ENCODE measurements at regions of chr17 and their contacts with region 1.

Region 1: GRCh38 chr17:49779739-49780231 is 8.7 kb upstream of the KAT7 start:
- DNase-seq: no peak
- H3K4me3 ChIP-seq: no peak overlapping the region
- H3K27ac ChIP-seq: no peak overlapping the region
- H3K4me1 ChIP-seq: peaks cover 19% of the 10 kb centered on the region
- H3K27me3 ChIP-seq: no peaks in the 10 kb centered on the region
- CTCF ChIP-seq: peak in 2 of 3 experiments; percentile 34 to 57
- POLR2A ChIP-seq: no peak

Region 2: GRCh38 chr17:49707608-49708514 is 71.9 kb before region 1 on chr17 and contains the start of gene SLC35B1:
- intact Hi-C with region 1: loop called (anchors 5 kb)
- DNase-seq: peak; percentile 98
- H3K4me3 ChIP-seq: peak within 1 kb of the TSS; percentile 77 to 78
- H3K27ac ChIP-seq: peak within 1 kb of the TSS; percentile 93
- H3K4me1 ChIP-seq: peaks cover 36% of the 10 kb centered on the region
- H3K27me3 ChIP-seq: no peaks in the 10 kb centered on the region
- CTCF ChIP-seq: peak; percentile 26 to 43 (median 35)
- POLR2A ChIP-seq: no peak
- total RNA-seq, gene SLC35B1: 42.0 TPM

Region 3: DNA sequence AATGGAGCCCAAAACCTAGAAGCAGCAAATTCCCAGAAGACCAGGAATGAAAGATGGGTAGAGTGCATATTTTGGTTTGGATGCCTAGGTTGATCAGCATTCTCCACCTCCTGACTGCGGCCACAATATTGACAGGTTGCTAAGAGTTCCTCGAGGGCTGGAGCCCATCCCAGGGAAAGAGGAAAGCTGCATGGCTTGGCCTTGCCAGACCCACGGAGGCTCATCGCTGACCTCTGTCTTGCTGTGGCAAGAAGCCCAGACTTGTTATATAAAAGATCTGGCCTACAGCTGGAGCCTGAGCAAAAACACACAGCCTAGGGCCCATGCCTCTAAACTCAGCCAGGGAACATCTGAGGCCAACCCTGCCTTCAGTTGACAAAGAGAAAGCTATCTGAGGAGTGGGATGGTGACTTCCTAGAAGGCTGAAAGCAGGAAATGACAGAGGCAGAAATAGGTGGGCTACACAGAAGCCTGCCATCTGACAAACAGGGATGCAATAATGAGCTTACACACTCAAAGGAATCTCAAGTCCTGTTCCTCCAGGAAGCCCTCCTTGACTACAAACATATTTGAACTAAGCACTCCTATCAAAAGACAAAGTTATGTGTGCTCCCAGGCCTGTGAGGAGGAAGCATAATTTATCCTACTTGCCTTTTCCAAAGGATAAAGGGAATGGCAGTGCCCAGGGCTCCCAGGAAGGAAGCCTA is 49.6 kb before region 1 on chr17:
- intact Hi-C with region 1: no loop called
- DNase-seq: peak in 1 of 2 donors; percentile 90
- H3K4me3 ChIP-seq: no peak overlapping the region
- H3K27ac ChIP-seq: peak overlapping the region; percentile 30
- H3K4me1 ChIP-seq: peaks cover 51% of the 10 kb centered on the region
- H3K27me3 ChIP-seq: no peaks in the 10 kb centered on the region
- CTCF ChIP-seq: no peak
- POLR2A ChIP-seq: no peak

Region 4: GRCh38 chr17:49910094-49910857 is 130.5 kb after region 1 on chr17:
- intact Hi-C with region 1: no loop called
- DNase-seq: no peak
- H3K4me3 ChIP-seq: peak overlapping the region in 1 of 2 donors; percentile 14
- H3K27ac ChIP-seq: no peak overlapping the region
- H3K4me1 ChIP-seq: peaks cover 10% of the 10 kb centered on the region
- H3K27me3 ChIP-seq: peaks cover 6% of the 10 kb centered on the region
- CTCF ChIP-seq: no peak
- POLR2A ChIP-seq: no peak